Natural killer cell (primary cell): ENCODE measurements at regions of chr1 and their contacts with region 1.

Region 1: DNA sequence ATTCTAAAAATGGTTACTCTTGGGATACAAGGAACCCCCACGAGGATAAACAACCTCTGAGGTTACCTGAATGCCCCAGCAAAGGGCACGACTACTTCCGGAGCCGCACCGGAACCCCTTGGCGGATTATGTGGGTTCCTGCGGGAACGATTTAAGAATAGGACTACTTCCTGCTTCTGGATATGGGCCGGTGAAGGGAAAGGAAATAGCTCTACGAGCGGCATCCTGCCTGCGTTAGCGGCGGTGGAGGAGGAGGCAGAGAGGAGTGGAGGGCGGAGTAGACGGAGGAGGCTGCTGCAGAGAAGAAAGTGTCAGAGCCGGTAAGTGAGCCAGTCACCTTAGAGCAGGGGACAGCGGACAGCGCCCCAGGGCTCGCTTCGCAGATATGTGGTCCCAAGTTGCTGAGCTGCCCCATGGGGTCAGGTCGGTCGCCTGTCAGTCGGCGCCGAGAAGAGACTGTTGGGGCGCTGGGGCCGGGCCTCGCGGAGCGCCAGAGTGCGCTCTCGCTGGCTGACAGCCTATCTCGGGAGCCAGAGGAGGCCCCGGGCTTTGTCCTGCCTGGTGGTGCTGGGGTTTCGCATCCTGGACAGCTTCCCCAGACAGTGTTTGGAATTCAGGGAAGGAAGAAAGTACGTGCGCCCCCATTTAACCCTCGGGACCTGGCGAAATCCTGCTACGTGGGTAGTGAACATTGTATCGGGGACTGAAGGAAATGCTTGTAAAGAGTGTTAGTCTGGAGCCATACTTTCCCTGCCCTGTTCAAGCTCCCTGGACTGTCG is at the start of gene KLHL20:
- DNase-seq: peak; percentile 68 to 93
- ATAC-seq: peak; percentile 92 to 97 (median 95)
- H3K4me3 ChIP-seq: peak within 1 kb of the TSS; percentile 99
- H3K4me3 Mint-ChIP-seq: peak within 1 kb of the TSS; percentile 96
- H3K27ac ChIP-seq: peak within 1 kb of the TSS; percentile 94
- H3K27ac Mint-ChIP-seq: peak within 1 kb of the TSS; percentile 95 to 96
- H3K4me1 ChIP-seq: no peaks in the 10 kb centered on the region
- H3K4me1 Mint-ChIP-seq: peaks cover 24 to 26% of the 10 kb centered on the region in 2 donors
- H3K27me3 ChIP-seq: peaks cover 3% of the 10 kb centered on the region
- H3K27me3 Mint-ChIP-seq: peaks cover 14 to 35% of the 10 kb centered on the region in 2 donors
- CTCF ChIP-seq: no peak
- total RNA-seq, gene KLHL20: 31.4 to 34.5 (median 33.1) TPM

Region 2: DNA sequence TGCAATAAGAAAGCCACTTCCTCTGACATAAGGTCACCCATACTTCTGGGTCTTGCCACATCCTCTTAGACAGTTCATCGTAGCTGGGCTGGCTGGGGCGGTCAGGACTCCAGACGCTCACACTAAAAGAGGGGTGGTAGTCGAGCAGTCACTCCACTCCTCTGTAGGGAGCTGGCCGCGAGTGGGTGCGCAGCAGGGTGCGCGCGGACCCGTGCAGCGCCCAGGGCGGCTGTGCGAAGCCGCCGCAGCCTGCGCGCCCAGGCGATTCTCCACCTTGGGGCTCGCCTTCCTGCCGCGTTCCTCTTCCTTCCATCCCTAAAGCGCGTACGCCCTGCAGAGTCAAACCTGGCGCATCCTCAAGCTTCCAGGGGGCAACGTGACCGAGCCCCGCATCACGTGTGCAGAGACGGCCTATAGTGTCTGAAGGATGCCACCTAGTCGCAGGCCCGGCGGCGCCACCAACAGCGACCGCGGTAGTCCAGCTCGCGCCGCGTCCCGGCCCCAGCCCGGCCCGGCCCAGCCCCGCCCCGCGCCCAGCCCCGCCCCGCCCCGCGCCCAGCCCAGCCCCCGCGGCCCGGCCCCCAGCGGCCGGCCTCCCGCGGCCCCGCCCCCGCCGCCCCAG is 238.2 kb before region 1 on chr1:
- intact Hi-C with region 1: loop called (anchors 5 kb)
- DNase-seq: peak; percentile 75 to 89
- ATAC-seq: peak; percentile 77 to 92 (median 85)
- H3K4me3 ChIP-seq: peak overlapping the region; percentile 85
- H3K4me3 Mint-ChIP-seq: peak overlapping the region; percentile 89
- H3K27ac ChIP-seq: peak overlapping the region; percentile 94
- H3K27ac Mint-ChIP-seq: peak overlapping the region; percentile 90 to 98
- H3K4me1 ChIP-seq: peaks cover 23% of the 10 kb centered on the region
- H3K4me1 Mint-ChIP-seq: peaks cover 58 to 69% of the 10 kb centered on the region in 2 donors
- H3K27me3 ChIP-seq: no peaks in the 10 kb centered on the region
- H3K27me3 Mint-ChIP-seq: no peaks in the 10 kb centered on the region
- CTCF ChIP-seq: no peak

Region 3: GRCh38 chr1:173749137-173749536 is 34.2 kb after region 1 on chr1:
- intact Hi-C with region 1: no loop called
- DNase-seq: no peak
- ATAC-seq: no peak
- H3K4me3 ChIP-seq: no peak overlapping the region
- H3K4me3 Mint-ChIP-seq: no peak overlapping the region
- H3K27ac ChIP-seq: no peak overlapping the region
- H3K27ac Mint-ChIP-seq: no peak overlapping the region
- H3K4me1 ChIP-seq: no peaks in the 10 kb centered on the region
- H3K4me1 Mint-ChIP-seq: peaks cover 12% of the 10 kb centered on the region in 2 donors
- H3K27me3 ChIP-seq: no peaks in the 10 kb centered on the region
- H3K27me3 Mint-ChIP-seq: no peaks in the 10 kb centered on the region
- CTCF ChIP-seq: no peak